MCF 10A (cell line): ENCODE measurements at regions of chr1 and their contacts with region 1.

Region 1: DNA sequence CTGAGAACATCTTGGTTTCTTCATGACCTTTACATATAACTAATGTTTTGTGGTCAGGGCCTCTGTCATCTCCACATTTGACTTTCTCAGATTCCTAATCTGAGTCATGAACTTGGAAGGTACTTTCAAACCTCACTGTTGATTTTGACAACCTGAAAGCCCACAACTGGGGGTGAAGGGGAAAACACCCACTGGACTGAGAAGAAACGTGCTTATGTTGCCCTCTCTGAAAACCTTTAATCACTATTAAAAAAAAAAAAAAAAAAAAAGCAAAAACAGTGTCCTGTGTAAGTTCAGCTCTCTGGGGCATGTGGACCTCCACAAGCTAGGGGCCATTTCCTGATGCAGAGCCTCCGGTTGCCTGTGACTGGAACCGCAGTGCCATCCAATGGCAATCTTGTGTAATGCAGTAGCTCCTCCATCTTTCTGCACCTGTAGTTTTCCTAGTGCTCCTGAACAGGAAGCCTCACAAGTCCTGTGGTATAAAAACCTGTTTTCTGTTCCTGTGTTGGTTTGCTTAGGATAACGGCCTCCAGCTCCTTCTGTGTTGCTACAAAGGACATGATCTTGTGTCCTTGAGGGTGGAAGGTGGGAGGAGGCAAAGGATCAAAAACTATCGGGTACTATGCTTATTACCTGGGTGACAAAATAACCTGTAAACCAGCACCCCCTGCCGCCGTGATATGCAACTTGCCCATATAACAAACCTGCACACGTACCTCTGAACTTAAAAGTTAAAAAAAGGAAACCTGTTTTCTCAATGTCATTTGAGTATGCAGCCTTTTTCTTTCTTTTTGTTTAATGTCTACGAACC is 124.5 kb downstream of the ZNF648 start:
- DNase-seq: peak; percentile 87
- H3K4me3 Mint-ChIP-seq: no peak overlapping the region
- H3K27ac Mint-ChIP-seq: no peak overlapping the region
- H3K4me1 Mint-ChIP-seq: no peaks in the 10 kb centered on the region
- H3K27me3 Mint-ChIP-seq: no peaks in the 10 kb centered on the region
- CTCF ChIP-seq: peak; percentile 75

Region 2: DNA sequence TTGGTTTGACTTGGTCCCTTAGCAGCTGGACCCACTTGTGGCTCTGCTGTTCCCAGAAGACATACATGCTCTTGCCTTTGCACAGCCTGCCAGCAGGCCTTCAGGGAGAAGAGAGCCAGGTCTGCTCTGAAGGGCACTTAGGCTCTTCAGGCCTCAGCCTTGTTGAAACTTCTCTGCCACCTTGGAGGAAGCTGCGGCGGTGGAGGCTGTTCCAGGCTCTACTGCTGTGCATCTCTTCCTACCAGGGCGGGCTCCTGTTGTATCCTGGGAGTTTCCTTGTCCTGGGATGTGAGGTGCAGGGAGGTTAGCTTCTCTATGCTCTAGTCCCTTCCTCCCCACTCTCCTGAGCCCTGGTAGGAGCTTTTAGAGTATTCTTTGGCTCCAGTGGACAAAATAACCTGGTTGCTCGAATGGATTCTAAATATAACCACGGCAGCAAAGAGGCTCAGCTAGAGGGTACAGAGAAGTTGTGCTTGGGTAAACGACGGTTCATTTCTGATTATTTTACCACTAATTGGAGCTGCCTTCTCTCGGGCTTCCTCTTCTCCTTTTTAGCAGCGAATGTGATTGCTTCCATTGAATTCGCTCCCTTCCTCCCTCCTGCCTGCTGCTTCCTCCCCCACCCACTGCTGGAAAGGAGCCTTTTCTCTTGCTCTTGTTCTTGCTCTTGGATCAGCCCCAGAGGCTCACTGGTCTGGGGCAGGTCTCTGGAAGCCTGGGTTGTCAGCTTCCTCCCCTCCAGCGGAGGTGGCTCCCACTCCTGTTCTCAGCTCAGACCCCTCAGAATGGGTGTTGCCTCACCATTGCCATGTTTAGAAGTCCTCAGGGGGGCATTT is 580.3 kb before region 1 on chr1:
- CTCF ChIA-PET with region 1: no interaction called
- POLR2A ChIA-PET with region 1: no interaction called
- intact Hi-C with region 1: no loop called
- DNase-seq: no peak
- H3K4me3 Mint-ChIP-seq: no peak overlapping the region
- H3K27ac Mint-ChIP-seq: no peak overlapping the region
- H3K4me1 Mint-ChIP-seq: no peaks in the 10 kb centered on the region
- H3K27me3 Mint-ChIP-seq: no peaks in the 10 kb centered on the region
- CTCF ChIP-seq: no peak

Region 3: DNA sequence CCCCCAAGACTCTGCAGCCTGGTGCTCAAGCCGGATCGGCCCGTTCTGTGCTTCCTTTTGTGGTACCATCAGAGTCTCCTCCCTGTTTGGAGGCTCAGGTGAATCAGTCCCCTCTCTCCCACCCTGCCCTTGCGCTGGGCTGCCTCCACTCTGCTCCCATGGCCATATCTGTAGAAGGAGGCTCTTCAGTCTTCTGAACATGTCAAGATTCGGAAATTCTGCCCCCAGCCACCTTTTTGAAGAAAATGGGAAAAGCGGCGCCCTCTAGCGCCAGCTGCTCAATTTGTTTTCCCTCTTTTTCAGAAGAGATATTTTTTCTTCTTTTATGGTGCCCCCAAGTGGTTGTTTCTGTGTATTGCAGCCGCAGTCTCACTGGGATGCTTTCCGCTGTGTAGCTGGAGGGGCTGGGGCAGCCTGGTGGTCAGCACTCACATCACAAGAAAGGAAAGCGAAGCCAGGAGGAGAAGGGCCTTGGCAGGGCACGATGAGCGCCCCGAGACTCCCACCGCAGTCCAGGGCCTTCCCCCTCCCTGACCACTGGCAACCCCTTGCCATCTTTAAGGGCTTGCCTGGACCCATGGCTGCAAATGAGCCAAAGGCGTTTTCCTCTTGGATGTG is 512.1 kb before region 1 on chr1:
- CTCF ChIA-PET with region 1: interaction called, 16 read pairs
- POLR2A ChIA-PET with region 1: no interaction called
- intact Hi-C with region 1: no loop called
- DNase-seq: peak; percentile 84
- H3K4me3 Mint-ChIP-seq: peak overlapping the region; percentile 56
- H3K27ac Mint-ChIP-seq: no peak overlapping the region
- H3K4me1 Mint-ChIP-seq: peaks cover 8% of the 10 kb centered on the region
- H3K27me3 Mint-ChIP-seq: peaks cover 38% of the 10 kb centered on the region
- CTCF ChIP-seq: peak; percentile 100

Region 4: GRCh38 chr1:181479137-181479745 is 457.7 kb before region 1 on chr1:
- CTCF ChIA-PET with region 1: interaction called, 410 read pairs
- POLR2A ChIA-PET with region 1: interaction called, 7 read pairs
- intact Hi-C with region 1: loop called (anchors 1 kb)
- DNase-seq: peak; percentile 80
- H3K4me3 Mint-ChIP-seq: no peak overlapping the region
- H3K27ac Mint-ChIP-seq: no peak overlapping the region
- H3K4me1 Mint-ChIP-seq: no peaks in the 10 kb centered on the region
- H3K27me3 Mint-ChIP-seq: peaks cover 28% of the 10 kb centered on the region
- CTCF ChIP-seq: peak; percentile 97

Region 5: GRCh38 chr1:181737056-181737455 is 199.9 kb before region 1 on chr1:
- CTCF ChIA-PET with region 1: interaction called, 25 read pairs
- POLR2A ChIA-PET with region 1: interaction called, 3 read pairs
- intact Hi-C with region 1: loop called (anchors 1 kb)
- DNase-seq: peak; percentile 34
- H3K4me3 Mint-ChIP-seq: no peak overlapping the region
- H3K27ac Mint-ChIP-seq: no peak overlapping the region
- H3K4me1 Mint-ChIP-seq: no peaks in the 10 kb centered on the region
- H3K27me3 Mint-ChIP-seq: peaks cover 17% of the 10 kb centered on the region
- CTCF ChIP-seq: peak; percentile 17

Region 6: GRCh38 chr1:181910905-181911304 is 26.1 kb before region 1 on chr1:
- CTCF ChIA-PET with region 1: interaction called, 10 read pairs
- POLR2A ChIA-PET with region 1: no interaction called
- intact Hi-C with region 1: no loop called
- DNase-seq: peak; percentile 27
- H3K4me3 Mint-ChIP-seq: no peak overlapping the region
- H3K27ac Mint-ChIP-seq: no peak overlapping the region
- H3K4me1 Mint-ChIP-seq: no peaks in the 10 kb centered on the region
- H3K27me3 Mint-ChIP-seq: peaks cover 27% of the 10 kb centered on the region
- CTCF ChIP-seq: no peak

Region 7: GRCh38 chr1:181969902-181970301 is 32.9 kb after region 1 on chr1:
- CTCF ChIA-PET with region 1: interaction called, 11 read pairs
- POLR2A ChIA-PET with region 1: no interaction called
- intact Hi-C with region 1: no loop called
- DNase-seq: no peak
- H3K4me3 Mint-ChIP-seq: no peak overlapping the region
- H3K27ac Mint-ChIP-seq: no peak overlapping the region
- H3K4me1 Mint-ChIP-seq: no peaks in the 10 kb centered on the region
- H3K27me3 Mint-ChIP-seq: peaks cover 16% of the 10 kb centered on the region
- CTCF ChIP-seq: no peak